PC-3 (cell line): ENCODE measurements at regions of chr5 and their contacts with region 1.

Region 1: GRCh38 chr5:148939676-148940075 is 113.3 kb downstream of the ADRB2 start:
- DNase-seq: peak; percentile 100
- ATAC-seq: peak; percentile 90
- H3K4me3 ChIP-seq: no peak overlapping the region
- H3K27ac ChIP-seq: peak overlapping the region; percentile 81
- H3K4me1 ChIP-seq: peaks cover 23% of the 10 kb centered on the region
- H3K27me3 ChIP-seq: no peaks in the 10 kb centered on the region
- CTCF ChIP-seq: no peak

Region 2: GRCh38 chr5:148963664-148964063 is 24.0 kb after region 1 on chr5:
- CTCF ChIA-PET with region 1: no interaction called
- POLR2A ChIA-PET with region 1: no interaction called
- intact Hi-C with region 1: loop called (anchors 1 kb)
- DNase-seq: no peak
- ATAC-seq: no peak
- H3K4me3 ChIP-seq: no peak overlapping the region
- H3K27ac ChIP-seq: peak overlapping the region; percentile 79; the same call in 1 of the 2 replicates
- H3K4me1 ChIP-seq: peaks cover 81% of the 10 kb centered on the region
- H3K27me3 ChIP-seq: no peaks in the 10 kb centered on the region
- CTCF ChIP-seq: no peak